Activated B cell treated with CpG ODN at 0.5 μM for 24 hours (primary cell): ENCODE measurements at regions of chr11 and their contacts with region 1.

Region 1: DNA sequence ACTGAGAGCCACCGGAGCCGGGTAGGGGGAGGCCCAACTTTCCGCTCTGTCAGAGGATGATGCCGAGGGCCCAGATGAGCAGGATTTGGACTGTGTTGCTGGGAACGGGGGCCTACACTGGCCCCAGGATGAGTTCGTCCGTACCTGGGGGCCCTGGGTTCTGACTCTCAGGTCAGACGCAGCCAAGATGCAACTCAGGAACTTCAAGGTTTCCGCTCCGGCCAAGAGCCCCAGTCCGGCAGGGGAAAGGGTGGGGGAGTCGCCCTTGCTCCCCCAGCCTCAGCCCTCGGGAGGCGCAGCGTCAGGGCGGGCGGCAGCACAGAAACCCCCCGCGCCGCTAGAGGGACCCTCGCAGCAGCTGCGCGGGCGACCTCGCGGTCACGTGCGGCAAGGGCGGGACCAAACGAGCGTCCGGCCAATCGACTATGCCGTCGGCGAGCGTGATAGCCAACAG is 241 bp upstream of the ARL2 start:
- DNase-seq: peak; percentile 84
- ATAC-seq: peak; percentile 83
- H3K4me3 Mint-ChIP-seq: peak overlapping the region; percentile 90
- H3K27ac Mint-ChIP-seq: peak overlapping the region; percentile 96
- H3K4me1 Mint-ChIP-seq: peaks cover 26% of the 10 kb centered on the region
- H3K27me3 Mint-ChIP-seq: no peaks in the 10 kb centered on the region
- CTCF ChIP-seq: no peak

Region 2: GRCh38 chr11:64742889-64743590 is 270.7 kb before region 1 on chr11:
- CTCF ChIA-PET with region 1: no interaction called
- POLR2A ChIA-PET with region 1: interaction called, 4 read pairs
- intact Hi-C with region 1: loop called (anchors 2 kb)
- DNase-seq: peak; percentile 89
- ATAC-seq: peak; percentile 12
- H3K4me3 Mint-ChIP-seq: peak overlapping the region; percentile 96
- H3K27ac Mint-ChIP-seq: no peak overlapping the region
- H3K4me1 Mint-ChIP-seq: peaks cover 43% of the 10 kb centered on the region
- H3K27me3 Mint-ChIP-seq: no peaks in the 10 kb centered on the region
- CTCF ChIP-seq: peak; percentile 85

Region 3: GRCh38 chr11:64878494-64879243 is 135.1 kb before region 1 on chr11 and contains the start of gene EHD1:
- CTCF ChIA-PET with region 1: no interaction called
- POLR2A ChIA-PET with region 1: interaction called, 3 read pairs
- intact Hi-C with region 1: loop called (anchors 1 kb)
- DNase-seq: peak; percentile 98
- ATAC-seq: peak; percentile 81
- H3K4me3 Mint-ChIP-seq: peak within 1 kb of the TSS; percentile 97
- H3K27ac Mint-ChIP-seq: peak within 1 kb of the TSS; percentile 95
- H3K4me1 Mint-ChIP-seq: peaks cover 57% of the 10 kb centered on the region
- H3K27me3 Mint-ChIP-seq: no peaks in the 10 kb centered on the region
- CTCF ChIP-seq: no peak
- total RNA-seq, gene EHD1: 357 and 360 TPM in 2 replicates

Region 4: GRCh38 chr11:64996710-64997380 is 16.9 kb before region 1 on chr11 and contains the start of gene BATF2:
- CTCF ChIA-PET with region 1: interaction called, 12 read pairs
- POLR2A ChIA-PET with region 1: interaction called, 11 read pairs
- intact Hi-C with region 1: no loop called
- DNase-seq: peak; percentile 33
- ATAC-seq: peak; percentile 88
- H3K4me3 Mint-ChIP-seq: peak within 1 kb of the TSS; percentile 70
- H3K27ac Mint-ChIP-seq: peak within 1 kb of the TSS; percentile 66
- H3K4me1 Mint-ChIP-seq: peaks cover 20% of the 10 kb centered on the region
- H3K27me3 Mint-ChIP-seq: no peaks in the 10 kb centered on the region
- CTCF ChIP-seq: no peak
- total RNA-seq, gene BATF2: 0.07 and 0.24 TPM in 2 replicates

Region 5: GRCh38 chr11:65083834-65084597 is 70.3 kb after region 1 on chr11 and contains the starts of genes CDCA5 and ZFPL1:
- CTCF ChIA-PET with region 1: interaction called, 3 read pairs
- POLR2A ChIA-PET with region 1: no interaction called
- intact Hi-C with region 1: loop called (anchors 1 kb)
- DNase-seq: peak; percentile 97
- ATAC-seq: peak; percentile 92
- H3K4me3 Mint-ChIP-seq: peak within 1 kb of the TSS; percentile 93
- H3K27ac Mint-ChIP-seq: peak within 1 kb of the TSS; percentile 94
- H3K4me1 Mint-ChIP-seq: peaks cover 25% of the 10 kb centered on the region
- H3K27me3 Mint-ChIP-seq: no peaks in the 10 kb centered on the region
- CTCF ChIP-seq: no peak
- total RNA-seq, gene CDCA5: 2.6 and 3.4 TPM in 2 replicates
- total RNA-seq, gene ZFPL1: 35.7 and 36.6 TPM in 2 replicates

Region 6: DNA sequence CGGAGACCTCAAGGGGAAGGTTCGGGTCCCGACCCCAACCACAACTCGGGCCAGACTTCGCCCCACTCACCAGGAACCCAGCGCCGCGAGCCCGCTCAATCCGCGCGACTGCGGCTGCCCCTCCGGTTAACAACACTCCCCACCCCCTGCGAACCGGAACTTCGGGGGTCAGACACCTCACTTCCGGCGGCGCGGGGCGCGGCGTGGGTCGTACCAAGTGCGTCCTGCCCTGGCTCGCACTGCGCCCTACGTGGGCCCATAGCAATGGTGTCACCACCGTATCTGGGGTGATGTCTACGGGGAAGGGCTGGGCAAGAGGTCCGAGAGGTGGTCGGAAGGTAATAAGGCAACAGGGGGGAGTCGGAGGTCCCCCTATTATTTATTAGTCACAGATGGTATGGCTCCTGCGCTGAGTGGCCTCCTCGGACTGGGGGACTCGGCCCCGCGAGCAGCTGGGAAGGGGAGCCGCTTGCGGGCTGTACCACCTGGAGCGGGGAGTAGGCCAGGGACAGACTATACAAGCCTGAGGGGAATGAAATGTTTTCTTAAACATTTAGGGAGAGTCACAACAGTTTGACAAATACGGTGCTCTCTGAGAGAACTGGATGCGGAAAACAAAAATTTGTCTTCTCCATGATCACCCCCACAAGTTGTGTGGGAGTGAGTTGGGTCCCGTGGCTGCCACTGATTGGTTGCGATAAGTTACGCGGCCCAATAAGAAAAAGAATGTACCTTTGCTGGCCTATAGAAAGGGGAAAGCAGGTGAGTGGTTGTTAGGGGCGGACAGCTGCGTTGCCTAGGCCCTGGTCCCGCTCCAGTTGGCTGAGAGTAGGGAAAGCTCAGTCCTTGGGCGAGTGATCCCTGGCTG is 120.9 kb after region 1 on chr11 and contains the start of gene SYVN1:
- CTCF ChIA-PET with region 1: interaction called, 3 read pairs
- POLR2A ChIA-PET with region 1: interaction called, 13 read pairs
- intact Hi-C with region 1: no loop called
- DNase-seq: peak; percentile 92
- ATAC-seq: peak; percentile 60
- H3K4me3 Mint-ChIP-seq: peak within 1 kb of the TSS; percentile 99
- H3K27ac Mint-ChIP-seq: peak within 1 kb of the TSS; percentile 99
- H3K4me1 Mint-ChIP-seq: peaks cover 64% of the 10 kb centered on the region
- H3K27me3 Mint-ChIP-seq: no peaks in the 10 kb centered on the region
- CTCF ChIP-seq: no peak
- total RNA-seq, gene SYVN1: 232 and 238 TPM in 2 replicates

Region 7: GRCh38 chr11:65329944-65330403 is 316.3 kb after region 1 on chr11:
- CTCF ChIA-PET with region 1: interaction called, 3 read pairs
- POLR2A ChIA-PET with region 1: no interaction called
- intact Hi-C with region 1: loop called (anchors 5 kb)
- DNase-seq: peak; percentile 56
- ATAC-seq: peak; percentile 43
- H3K4me3 Mint-ChIP-seq: peak overlapping the region; percentile 78
- H3K27ac Mint-ChIP-seq: peak overlapping the region; percentile 96
- H3K4me1 Mint-ChIP-seq: peaks cover 24% of the 10 kb centered on the region
- H3K27me3 Mint-ChIP-seq: no peaks in the 10 kb centered on the region
- CTCF ChIP-seq: no peak